Left cardiac atrium (tissue), 4 donors: ENCODE measurements at regions of chr6 and their contacts with region 1.

Region 1: DNA sequence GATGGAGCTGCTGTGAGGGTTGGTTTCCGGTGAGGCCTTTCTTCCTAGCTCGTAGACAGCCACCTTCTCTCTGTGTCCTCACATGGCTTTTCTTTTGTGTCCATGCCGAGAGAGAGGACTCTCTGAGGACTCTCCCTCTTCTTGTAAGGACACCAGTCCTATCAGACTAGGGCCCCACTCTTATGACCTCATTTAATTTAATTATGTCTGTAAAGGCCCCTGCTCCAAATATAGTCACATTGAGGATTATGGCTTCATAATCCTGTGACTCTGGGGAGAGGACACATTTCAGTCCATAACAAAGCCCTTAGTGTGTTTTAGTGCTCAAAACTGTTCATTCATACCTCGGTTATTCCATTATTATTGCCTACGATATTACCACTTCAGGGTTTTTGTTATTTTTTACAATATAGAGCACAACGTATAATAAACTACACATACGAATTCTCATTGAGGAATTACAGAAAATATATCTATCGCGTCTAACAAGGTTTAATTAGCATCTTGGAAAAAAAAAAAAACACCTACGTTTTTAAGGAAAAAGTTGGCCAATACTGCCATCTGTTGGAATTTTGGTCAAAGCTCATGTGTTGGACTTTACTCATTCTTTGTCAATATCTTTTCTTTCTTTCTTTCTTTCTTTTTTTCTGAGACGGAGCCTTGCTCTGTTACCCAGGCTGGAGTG is 20.0 kb upstream of the TFAP2A start:
- DNase-seq: no peak
- ATAC-seq: no peak

Region 2: GRCh38 chr6:8983188-8983688 is 1451.6 kb before region 1 on chr6:
- intact Hi-C with region 1: loop called in 1 of 2 experiments (anchors 2 kb)
- DNase-seq: peak; percentile 48
- ATAC-seq: peak; percentile 80 to 86

Region 3: DNA sequence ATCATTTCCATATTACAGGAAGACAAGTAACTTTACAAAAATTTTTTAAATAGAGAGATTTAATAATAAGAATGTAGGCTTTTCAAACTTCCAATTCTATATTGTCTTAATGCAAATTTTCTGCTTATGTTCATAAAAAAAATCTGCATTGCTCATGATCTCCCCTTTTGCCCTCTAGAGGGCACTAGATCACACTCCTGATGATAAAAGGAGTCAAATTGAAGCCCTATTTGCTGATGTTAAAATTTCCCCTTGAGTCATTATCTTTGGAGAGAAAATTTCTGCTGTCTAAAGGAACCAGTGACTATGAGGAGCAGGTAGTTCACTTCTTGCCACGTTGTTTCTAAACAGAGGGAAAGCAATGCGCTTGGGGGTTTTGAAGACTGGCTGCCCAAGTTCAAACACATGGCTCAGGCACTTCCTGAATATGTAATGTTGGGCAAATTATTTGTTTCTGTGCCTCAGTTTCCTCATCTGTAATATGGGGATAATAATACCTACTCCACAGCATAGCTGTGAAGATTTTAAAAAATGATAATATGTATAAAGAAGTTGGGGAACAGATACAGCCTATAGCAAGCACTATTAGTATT is 894.2 kb before region 1 on chr6:
- intact Hi-C with region 1: loop called (anchors 5 to 10 kb)
- DNase-seq: no peak
- ATAC-seq: no peak